AG04449 (cell line): ENCODE measurements at regions of chr7 and their contacts with region 1.

Region 1: GRCh38 chr7:7956531-7957128 is 12.0 kb upstream of the GLCCI1 start:
- DNase-seq: peak; percentile 26
- H3K4me3 ChIP-seq: no peak overlapping the region
- CTCF ChIP-seq: no peak

Region 2: DNA sequence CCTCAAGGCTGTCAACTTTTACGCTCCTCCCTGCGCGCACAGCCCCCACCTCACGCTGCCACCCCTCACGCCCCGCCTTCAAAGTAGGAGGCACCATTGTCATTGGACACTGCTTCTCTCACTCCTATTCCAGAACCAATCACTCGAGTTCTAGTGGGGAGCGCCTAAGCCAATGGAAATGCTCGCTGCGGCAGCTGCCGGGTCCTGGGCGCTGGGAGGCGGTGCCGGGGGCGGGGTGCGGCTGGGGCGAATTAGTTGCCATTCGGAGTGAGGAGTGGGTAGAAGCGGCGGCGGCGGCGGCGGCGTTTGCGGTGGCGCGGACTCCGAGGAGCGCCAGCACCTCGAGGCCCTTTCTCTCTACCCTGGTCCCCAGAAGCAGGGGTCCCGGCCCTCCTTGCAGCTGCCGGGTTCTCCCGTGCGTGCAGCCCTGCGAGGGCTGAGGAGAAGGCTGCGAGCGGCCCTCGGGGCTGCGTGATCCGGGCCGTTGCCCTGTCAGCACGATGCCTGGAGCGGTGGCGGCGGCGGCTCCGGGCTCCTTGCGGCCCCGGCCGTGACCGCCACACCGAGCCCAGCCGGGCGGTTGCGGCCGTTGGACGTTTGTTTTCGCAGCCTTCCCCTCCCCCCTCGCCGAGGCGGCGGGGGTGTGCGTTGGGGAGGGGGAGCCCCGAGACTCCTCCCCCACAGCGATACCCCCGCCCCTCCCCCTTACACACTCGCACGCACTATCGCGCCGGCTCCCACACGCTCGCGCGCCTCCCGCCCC is 12.1 kb after region 1 on chr7 and contains the start of gene GLCCI1:
- CTCF ChIA-PET with region 1: interaction called, 23 read pairs
- POLR2A ChIA-PET with region 1: interaction called, 3 read pairs
- DNase-seq: peak; percentile 76
- H3K4me3 ChIP-seq: peak within 1 kb of the TSS; percentile 82
- CTCF ChIP-seq: no peak